Adrenal gland (tissue), 19 donors: ENCODE measurements at regions of chr22 and their contacts with region 1.

Region 1: GRCh38 chr22:41091132-41092022 is 1.0 kb upstream of the EP300 start:
- DNase-seq: peak; percentile 99 to 100 (median 99)
- H3K4me3 ChIP-seq: peak overlapping the region; percentile 49 to 99 (median 96)
- H3K27ac ChIP-seq: peak overlapping the region; percentile 98 to 100 (median 100)
- H3K4me1 ChIP-seq: peaks cover 11 to 34% of the 10 kb centered on the region in 2 donors
- H3K27me3 ChIP-seq: no peaks in the 10 kb centered on the region
- CTCF ChIP-seq: no peak
- POLR2A ChIP-seq: peak; percentile 70 to 93

Region 2: DNA sequence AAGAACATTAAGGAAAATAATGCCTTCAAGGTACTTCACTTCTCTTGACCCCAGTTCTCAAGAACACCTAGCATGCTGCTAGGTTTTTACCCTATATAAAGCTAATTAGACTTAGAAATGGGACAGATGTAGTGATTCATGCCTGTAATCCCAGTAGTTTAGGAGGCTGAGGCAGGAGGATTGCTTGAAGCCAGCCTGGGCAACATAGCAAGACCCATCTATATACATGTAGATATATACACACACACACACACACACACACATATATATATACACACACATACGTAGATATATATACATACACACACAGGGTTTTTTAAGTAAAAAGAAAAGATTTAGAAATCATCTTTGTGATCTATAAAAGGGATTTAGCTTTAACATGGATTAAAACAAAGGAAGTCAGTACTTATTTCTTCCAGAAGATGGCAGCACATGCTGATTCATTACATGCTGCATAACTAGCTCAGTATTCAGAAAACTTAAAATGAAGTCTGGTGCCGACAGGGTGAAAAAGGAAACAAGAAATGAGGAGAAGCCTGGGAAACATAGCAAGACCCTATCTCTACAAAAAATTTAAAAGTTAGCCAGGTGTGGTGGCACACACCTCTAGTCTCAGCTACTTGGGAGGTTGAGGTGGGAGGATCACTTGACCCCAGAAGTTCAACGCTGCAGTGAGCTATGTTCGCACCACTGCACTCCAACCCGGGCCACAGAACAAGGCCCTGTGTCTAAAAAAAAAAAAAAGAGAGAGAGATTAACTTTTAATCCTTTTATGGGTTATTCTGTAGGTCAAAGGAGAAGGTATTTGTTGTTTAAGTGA is 168.7 kb before region 1 on chr22:
- intact Hi-C with region 1: no loop called
- DNase-seq: peak in 2 of 7 donors; percentile 12 to 26
- H3K4me3 ChIP-seq: no peak overlapping the region
- H3K27ac ChIP-seq: no peak overlapping the region
- H3K4me1 ChIP-seq: no peaks in the 10 kb centered on the region
- H3K27me3 ChIP-seq: no peaks in the 10 kb centered on the region
- CTCF ChIP-seq: peak; percentile 48 to 86 (median 81)
- POLR2A ChIP-seq: no peak

Region 3: GRCh38 chr22:40950962-40951794 is 140.2 kb before region 1 on chr22 and contains the start of gene RBX1:
- intact Hi-C with region 1: loop called (anchors 2 to 10 kb)
- DNase-seq: peak; percentile 98 to 99 (median 99)
- H3K4me3 ChIP-seq: peak within 1 kb of the TSS; percentile 35 to 85 (median 76)
- H3K27ac ChIP-seq: peak within 1 kb of the TSS; percentile 37 to 94 (median 90)
- H3K4me1 ChIP-seq: peaks cover 11 to 21% of the 10 kb centered on the region in 2 donors
- H3K27me3 ChIP-seq: no peaks in the 10 kb centered on the region
- CTCF ChIP-seq: no peak
- POLR2A ChIP-seq: peak; percentile 78 to 82
- total RNA-seq, gene RBX1: 26.8 to 88.1 (median 54.5) TPM

Region 4: GRCh38 chr22:41022470-41023298 is 68.7 kb before region 1 on chr22:
- intact Hi-C with region 1: loop called in 1 of 2 experiments (anchors 5 kb)
- DNase-seq: peak; percentile 94 to 96 (median 95)
- H3K4me3 ChIP-seq: peak overlapping the region in 3 of 4 donors; percentile 44 to 78 (median 73)
- H3K27ac ChIP-seq: peak overlapping the region; percentile 85 to 99 (median 98)
- H3K4me1 ChIP-seq: peaks cover 8 to 14% of the 10 kb centered on the region in 2 donors
- H3K27me3 ChIP-seq: no peaks in the 10 kb centered on the region
- CTCF ChIP-seq: peak in 1 of 6 experiments; percentile 5
- POLR2A ChIP-seq: peak; percentile 64 to 91

Region 5: DNA sequence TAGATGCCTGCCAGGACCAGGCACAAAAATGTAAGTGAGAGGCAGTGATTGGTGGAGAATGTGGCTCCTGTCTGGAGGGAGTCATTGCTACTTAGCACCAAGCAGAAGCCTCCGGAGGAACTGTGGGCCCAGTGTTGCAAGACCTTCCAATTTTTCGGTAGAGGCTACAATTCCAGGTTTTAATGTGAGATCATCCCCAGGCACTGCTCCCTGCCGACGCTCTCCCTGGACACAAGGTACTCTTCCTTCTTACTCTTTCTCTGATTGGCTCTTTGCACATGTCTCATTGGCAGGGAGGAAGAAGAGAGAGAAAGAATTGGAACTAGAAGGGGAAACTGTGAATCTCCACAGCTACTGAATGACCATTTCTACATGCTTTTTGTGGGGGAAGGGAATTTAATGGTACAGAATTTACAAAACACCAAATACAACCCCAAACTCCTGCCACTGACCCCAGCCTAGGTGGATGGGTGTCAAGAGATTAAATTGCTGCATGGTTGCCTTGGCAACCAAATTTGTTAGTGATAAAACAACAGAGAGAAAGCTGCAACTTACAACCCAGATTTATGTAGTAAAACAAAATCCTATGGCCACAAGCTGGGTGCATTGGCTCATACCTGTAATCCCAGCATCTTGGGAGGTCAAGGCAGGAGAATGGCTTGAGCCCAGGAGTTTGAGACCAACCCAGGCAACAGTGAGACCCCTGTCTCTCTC is 52.5 kb before region 1 on chr22:
- intact Hi-C with region 1: no loop called
- DNase-seq: no peak
- H3K4me3 ChIP-seq: no peak overlapping the region
- H3K27ac ChIP-seq: no peak overlapping the region
- H3K4me1 ChIP-seq: no peaks in the 10 kb centered on the region
- H3K27me3 ChIP-seq: no peaks in the 10 kb centered on the region
- CTCF ChIP-seq: no peak
- POLR2A ChIP-seq: no peak

Region 6: DNA sequence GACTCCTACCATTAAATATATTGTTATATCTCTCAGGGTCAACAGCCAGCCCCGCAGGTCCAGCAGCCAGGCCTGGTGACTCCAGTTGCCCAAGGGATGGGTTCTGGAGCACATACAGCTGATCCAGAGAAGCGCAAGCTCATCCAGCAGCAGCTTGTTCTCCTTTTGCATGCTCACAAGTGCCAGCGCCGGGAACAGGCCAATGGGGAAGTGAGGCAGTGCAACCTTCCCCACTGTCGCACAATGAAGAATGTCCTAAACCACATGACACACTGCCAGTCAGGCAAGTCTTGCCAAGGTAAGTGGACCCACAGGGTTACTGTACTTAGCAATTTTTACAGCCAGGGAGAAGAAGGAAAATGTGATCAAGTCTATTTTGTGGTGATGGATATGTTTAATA is 36.1 kb after region 1 on chr22:
- intact Hi-C with region 1: no loop called
- DNase-seq: peak in 4 of 7 donors; percentile 20 to 41 (median 33)
- H3K4me3 ChIP-seq: no peak overlapping the region
- H3K27ac ChIP-seq: no peak overlapping the region
- H3K4me1 ChIP-seq: no peaks in the 10 kb centered on the region
- H3K27me3 ChIP-seq: no peaks in the 10 kb centered on the region
- CTCF ChIP-seq: no peak
- POLR2A ChIP-seq: no peak